Activated T-helper 1 cell treated with anti-CD3 and anti-CD28 coated beads, Interleukin-12 subunit alpha, Interleukin-12 subunit beta, Interleukin-2, Interleukin-4 antibody, amounts not matched to agents 30 ng/mL and 10 ng/mL and 1 ng/mL, durations not matched to agents 14 hours and 24 hours and 36 hours (primary cell): ENCODE measurements at regions of chr22 and their contacts with region 1.

Region 1: DNA sequence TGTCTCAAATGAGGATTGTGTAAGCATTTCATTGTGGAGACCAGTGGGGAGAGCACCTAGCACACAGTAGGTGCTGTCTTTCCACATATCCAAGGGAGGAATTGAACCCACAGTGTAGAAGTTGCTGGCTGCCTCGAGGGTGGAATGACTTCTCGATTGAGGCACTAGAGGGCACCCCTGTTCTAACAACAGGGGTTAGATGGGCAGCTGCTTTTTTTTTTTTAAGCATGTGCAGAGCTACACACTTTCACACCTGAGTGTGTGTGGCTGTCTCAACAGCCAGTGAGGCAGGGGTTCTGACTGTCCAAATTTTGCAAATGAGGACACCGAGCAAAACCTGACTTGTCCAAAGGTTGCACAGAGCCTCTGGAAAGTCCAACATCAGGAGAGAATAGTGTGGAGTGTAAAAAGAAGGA is 118.2 kb upstream of the CRYBB3 start:
- DNase-seq: peak; percentile 33
- H3K4me3 Mint-ChIP-seq: no peak overlapping the region
- H3K27ac Mint-ChIP-seq: peak overlapping the region; percentile 72
- H3K4me1 Mint-ChIP-seq: peaks cover 83% of the 10 kb centered on the region
- H3K27me3 Mint-ChIP-seq: no peaks in the 10 kb centered on the region

Region 2: DNA sequence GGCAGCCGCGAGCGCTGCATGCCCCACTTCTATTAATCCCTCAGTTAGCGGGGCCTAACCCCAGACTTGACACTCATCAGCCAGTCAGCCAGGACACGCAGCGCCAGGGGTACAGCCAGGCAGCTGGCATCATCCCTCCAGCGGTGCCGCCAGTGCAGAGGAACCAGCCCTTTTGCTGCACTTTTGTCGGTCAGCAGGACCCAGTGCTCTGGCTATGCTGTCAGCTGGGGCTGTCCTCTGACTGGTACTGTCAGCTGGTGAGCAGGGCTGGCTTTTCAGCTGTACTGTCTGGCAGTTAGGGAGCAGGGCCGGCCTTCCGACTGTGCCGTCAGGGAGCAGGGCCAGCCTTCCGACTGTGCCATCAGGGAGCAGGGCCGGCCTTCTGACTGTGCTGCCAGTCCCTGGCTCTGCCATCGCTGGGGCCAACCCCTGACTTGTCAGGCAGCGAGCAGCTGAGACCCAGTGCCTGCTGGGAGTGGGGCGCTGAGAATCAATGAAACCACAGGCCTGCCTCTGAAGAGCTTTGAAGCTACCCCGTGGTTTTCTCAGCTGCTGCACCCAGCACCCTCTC is 13.5 kb before region 1 on chr22:
- intact Hi-C with region 1: loop called (anchors 1 kb)
- DNase-seq: peak; percentile 82
- H3K4me3 Mint-ChIP-seq: peak overlapping the region; percentile 94
- H3K27ac Mint-ChIP-seq: peak overlapping the region; percentile 99
- H3K4me1 Mint-ChIP-seq: peaks cover 83% of the 10 kb centered on the region
- H3K27me3 Mint-ChIP-seq: no peaks in the 10 kb centered on the region

Region 3: DNA sequence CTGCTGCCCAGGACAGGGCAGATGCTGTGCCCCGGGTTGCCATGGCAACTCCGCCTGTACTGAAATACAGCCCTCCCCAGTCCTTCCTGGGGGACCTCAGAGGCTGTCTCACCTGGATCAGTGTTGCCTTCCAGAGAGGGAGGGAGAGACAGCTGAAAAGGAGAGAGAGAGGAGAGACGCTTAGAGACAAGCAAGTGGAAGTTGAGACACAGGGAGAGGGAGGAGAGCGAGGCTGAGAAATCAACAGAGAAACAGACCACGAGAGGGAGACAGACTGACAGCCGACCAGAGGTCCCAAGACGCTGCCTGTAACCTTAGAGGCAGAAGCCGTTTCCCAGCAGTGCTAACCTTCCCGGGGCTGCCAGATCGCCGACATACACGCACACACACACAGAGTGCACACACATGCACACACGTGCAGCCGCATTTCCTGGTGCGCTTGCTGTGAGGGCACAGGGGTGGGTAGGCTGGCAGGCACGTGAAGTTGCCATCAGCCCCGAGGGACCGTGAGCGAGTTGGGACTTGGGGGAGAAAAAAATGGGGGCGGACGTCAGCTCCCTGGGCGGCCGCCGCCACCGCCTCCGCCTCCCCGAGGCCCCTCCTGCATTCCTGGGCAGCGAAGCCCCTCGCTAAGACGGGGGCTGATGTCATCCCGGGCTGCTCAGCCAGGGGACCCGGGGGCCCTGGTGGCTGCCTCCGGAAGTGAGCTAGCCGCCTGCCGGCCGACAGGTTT is 29.6 kb after region 1 on chr22:
- intact Hi-C with region 1: loop called (anchors 2 kb)
- DNase-seq: peak; percentile 30
- H3K4me3 Mint-ChIP-seq: peak overlapping the region; percentile 82
- H3K27ac Mint-ChIP-seq: peak overlapping the region; percentile 82
- H3K4me1 Mint-ChIP-seq: peaks cover 18% of the 10 kb centered on the region
- H3K27me3 Mint-ChIP-seq: peaks cover 2% of the 10 kb centered on the region

Region 4: GRCh38 chr22:25172153-25172552 is 90.7 kb after region 1 on chr22:
- intact Hi-C with region 1: loop called (anchors 1 kb)
- DNase-seq: no peak
- H3K4me3 Mint-ChIP-seq: no peak overlapping the region
- H3K27ac Mint-ChIP-seq: no peak overlapping the region
- H3K4me1 Mint-ChIP-seq: peaks cover 5% of the 10 kb centered on the region
- H3K27me3 Mint-ChIP-seq: no peaks in the 10 kb centered on the region

Region 5: DNA sequence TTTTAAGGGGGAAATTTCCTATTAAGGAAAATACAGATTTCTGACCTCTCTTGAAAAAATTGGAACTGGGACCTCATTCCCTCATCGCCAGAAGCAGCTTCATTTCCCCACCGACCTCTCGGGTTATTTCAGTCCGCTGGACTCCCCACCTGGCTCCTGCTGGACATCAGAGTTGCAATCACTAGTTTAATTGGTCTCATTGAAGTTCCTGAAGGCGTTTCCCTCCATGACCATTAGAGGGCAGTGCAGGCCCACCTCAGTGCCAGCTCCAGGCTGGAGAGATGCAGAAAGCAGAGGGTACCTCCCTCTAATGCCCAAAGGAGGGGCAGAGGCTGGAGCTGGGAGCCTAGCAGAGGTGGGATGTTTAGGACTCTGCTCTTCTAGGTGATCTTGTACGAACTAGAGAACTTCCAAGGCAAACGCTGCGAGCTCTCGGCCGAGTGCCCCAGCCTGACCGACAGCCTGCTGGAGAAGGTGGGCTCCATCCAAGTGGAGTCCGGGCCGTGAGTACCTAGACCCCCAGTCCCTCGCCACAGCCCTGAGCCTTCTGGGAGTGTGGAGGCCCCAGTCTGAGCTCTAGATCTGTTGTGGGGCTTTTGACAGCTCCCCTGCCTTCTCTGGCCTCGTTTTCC is 121.0 kb after region 1 on chr22:
- intact Hi-C with region 1: loop called (anchors 2 kb)
- DNase-seq: peak; percentile 24
- H3K4me3 Mint-ChIP-seq: no peak overlapping the region
- H3K27ac Mint-ChIP-seq: no peak overlapping the region
- H3K4me1 Mint-ChIP-seq: peaks cover 6% of the 10 kb centered on the region
- H3K27me3 Mint-ChIP-seq: no peaks in the 10 kb centered on the region

Region 6: DNA sequence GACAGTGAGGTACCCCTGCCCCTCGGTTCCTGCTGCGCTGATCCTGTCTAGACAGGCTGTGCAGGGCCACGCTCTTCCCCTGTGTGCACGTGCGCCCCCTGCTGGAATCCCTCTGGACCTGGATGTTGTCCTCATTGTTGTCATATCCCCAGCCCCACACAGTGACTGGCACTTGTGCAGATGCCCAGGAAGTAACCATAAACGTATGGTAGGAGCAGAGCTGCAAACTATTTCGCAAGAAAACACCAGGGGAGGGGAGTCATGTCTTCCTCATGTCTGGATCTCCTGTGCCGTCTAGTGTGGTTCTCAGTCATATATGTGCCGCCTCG is 252.7 kb after region 1 on chr22:
- intact Hi-C with region 1: loop called (anchors 2 kb)
- DNase-seq: peak; percentile 27
- H3K4me3 Mint-ChIP-seq: no peak overlapping the region
- H3K27ac Mint-ChIP-seq: no peak overlapping the region
- H3K4me1 Mint-ChIP-seq: peaks cover 5% of the 10 kb centered on the region
- H3K27me3 Mint-ChIP-seq: peaks cover 1% of the 10 kb centered on the region

Region 7: GRCh38 chr22:26259519-26259918 is 1178.1 kb after region 1 on chr22:
- intact Hi-C with region 1: no loop called
- DNase-seq: no peak
- H3K4me3 Mint-ChIP-seq: no peak overlapping the region
- H3K27ac Mint-ChIP-seq: no peak overlapping the region
- H3K4me1 Mint-ChIP-seq: no peaks in the 10 kb centered on the region
- H3K27me3 Mint-ChIP-seq: peaks cover 12% of the 10 kb centered on the region